ENCODE measurements at regions of chr4 and their contacts with region 1.

Region 1: DNA sequence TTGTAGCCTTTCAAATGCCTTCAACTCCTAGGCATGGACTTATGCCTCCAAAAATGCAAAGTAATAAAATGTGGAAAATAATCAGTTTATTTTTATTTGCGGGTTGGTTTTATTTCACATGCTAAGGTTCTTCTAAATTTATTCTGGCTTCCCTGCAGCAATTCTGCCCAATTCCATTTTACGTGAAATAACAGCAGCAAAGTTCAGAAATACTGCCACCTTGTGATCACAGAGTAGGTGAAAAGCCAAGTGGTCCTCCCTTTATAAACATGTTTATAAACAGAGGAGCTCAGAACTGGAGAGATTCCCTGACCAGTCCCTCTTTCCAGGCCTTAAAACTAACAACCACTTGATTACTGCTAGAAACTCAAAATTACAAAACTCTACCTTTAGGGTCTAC is 14.7 kb upstream of the DCHS2 start:
- DNase-seq: no peak
- ATAC-seq: peak; percentile 75
- H3K4me3 Mint-ChIP-seq: no peak overlapping the region
- H3K27ac Mint-ChIP-seq: no peak overlapping the region
- H3K4me1 Mint-ChIP-seq: peaks cover 15% of the 10 kb centered on the region
- H3K27me3 Mint-ChIP-seq: no peaks in the 10 kb centered on the region
- CTCF ChIP-seq: peak; percentile 26; the same call in 1 of the 2 replicates

Region 2: GRCh38 chr4:154344686-154345085 is 161.6 kb before region 1 on chr4:
- CTCF ChIA-PET with region 1: interaction called, 34 read pairs
- POLR2A ChIA-PET with region 1: no interaction called
- DNase-seq: peak; percentile 42
- ATAC-seq: peak; percentile 99
- H3K4me3 Mint-ChIP-seq: no peak overlapping the region
- H3K27ac Mint-ChIP-seq: no peak overlapping the region
- H3K4me1 Mint-ChIP-seq: no peaks in the 10 kb centered on the region
- H3K27me3 Mint-ChIP-seq: no peaks in the 10 kb centered on the region
- CTCF ChIP-seq: no peak

Region 3: GRCh38 chr4:154399259-154399974 is 106.8 kb before region 1 on chr4:
- CTCF ChIA-PET with region 1: interaction called, 17 read pairs
- POLR2A ChIA-PET with region 1: no interaction called
- DNase-seq: no peak
- ATAC-seq: peak; percentile 68
- H3K4me3 Mint-ChIP-seq: no peak overlapping the region
- H3K27ac Mint-ChIP-seq: no peak overlapping the region
- H3K4me1 Mint-ChIP-seq: no peaks in the 10 kb centered on the region
- H3K27me3 Mint-ChIP-seq: no peaks in the 10 kb centered on the region
- CTCF ChIP-seq: no peak

Region 4: GRCh38 chr4:154416190-154416547 is 90.1 kb before region 1 on chr4:
- CTCF ChIA-PET with region 1: interaction called, 24 read pairs
- POLR2A ChIA-PET with region 1: no interaction called
- DNase-seq: peak; percentile 59
- ATAC-seq: peak; percentile 74
- H3K4me3 Mint-ChIP-seq: peak overlapping the region; percentile 95
- H3K27ac Mint-ChIP-seq: no peak overlapping the region
- H3K4me1 Mint-ChIP-seq: peaks cover 19% of the 10 kb centered on the region
- H3K27me3 Mint-ChIP-seq: peaks cover 17% of the 10 kb centered on the region
- CTCF ChIP-seq: no peak

Region 5: DNA sequence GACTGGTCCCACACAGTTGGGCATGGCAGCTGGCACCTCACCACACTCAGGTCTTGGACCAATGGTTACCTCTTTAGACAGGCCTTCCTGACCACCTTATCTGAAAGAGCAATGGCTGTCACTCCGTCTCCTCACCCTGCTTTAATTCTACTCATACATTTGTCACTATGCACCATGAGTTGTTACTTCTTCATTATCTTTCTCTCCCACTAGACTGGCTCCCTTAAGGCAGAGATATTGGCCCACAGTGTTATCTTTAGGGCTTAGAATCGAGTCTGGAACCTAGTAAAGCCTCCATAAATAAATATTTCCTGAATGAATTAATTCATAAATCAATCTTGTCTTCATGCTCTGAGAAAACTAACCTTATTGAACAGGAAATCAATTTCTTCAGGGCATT is 61.3 kb before region 1 on chr4:
- CTCF ChIA-PET with region 1: no interaction called
- POLR2A ChIA-PET with region 1: no interaction called
- DNase-seq: no peak
- ATAC-seq: no peak
- H3K4me3 Mint-ChIP-seq: no peak overlapping the region
- H3K27ac Mint-ChIP-seq: no peak overlapping the region
- H3K4me1 Mint-ChIP-seq: no peaks in the 10 kb centered on the region
- H3K27me3 Mint-ChIP-seq: no peaks in the 10 kb centered on the region
- CTCF ChIP-seq: no peak

Region 6: GRCh38 chr4:154491341-154492271 is 14.6 kb before region 1 on chr4 and contains the start of gene DCHS2:
- CTCF ChIA-PET with region 1: interaction called, 13 read pairs
- POLR2A ChIA-PET with region 1: interaction called, 4 read pairs
- DNase-seq: peak; percentile 69
- ATAC-seq: peak; percentile 64
- H3K4me3 Mint-ChIP-seq: peak within 1 kb of the TSS; percentile 80
- H3K27ac Mint-ChIP-seq: no peak within 1 kb of the TSS
- H3K4me1 Mint-ChIP-seq: peaks cover 16% of the 10 kb centered on the region
- H3K27me3 Mint-ChIP-seq: peaks cover 83% of the 10 kb centered on the region
- CTCF ChIP-seq: no peak
- total RNA-seq, gene DCHS2: 1.3 to 1.9 TPM (median 1.4 TPM) in 3 replicates

Region 7: DNA sequence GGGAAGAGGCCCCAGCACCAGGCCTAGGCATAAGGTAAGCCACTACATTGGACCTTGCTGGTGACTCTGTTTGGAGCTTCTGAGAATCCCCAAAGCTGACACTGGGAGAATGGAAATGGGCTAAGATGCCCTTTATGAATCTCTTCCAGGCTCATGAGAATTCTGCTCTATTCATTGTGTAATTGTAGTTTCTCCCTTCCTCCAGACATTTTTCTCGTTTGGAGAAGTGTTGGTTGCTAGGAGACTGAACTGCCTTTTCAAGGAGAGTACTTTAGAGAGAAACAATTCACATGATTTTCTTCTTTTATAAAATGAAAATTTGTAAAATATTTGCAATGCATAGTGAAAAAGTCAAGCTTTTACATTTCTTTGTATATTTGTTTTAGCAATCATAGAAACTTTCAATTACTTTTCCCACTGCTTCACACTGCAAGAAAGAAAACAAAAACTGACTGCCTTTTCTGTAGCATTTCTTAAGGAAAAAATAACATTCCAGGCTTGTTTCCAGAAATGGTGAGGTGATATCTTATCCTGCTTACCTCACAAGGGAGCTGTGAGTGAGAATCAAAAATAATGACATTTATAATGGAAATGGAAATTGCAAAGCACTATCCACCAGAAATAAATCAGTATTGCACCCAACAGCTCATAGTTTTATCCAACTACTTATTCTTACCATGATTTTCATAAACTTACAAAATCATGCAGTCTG is 10.2 kb after region 1 on chr4:
- CTCF ChIA-PET with region 1: interaction called, 19 read pairs
- POLR2A ChIA-PET with region 1: no interaction called
- DNase-seq: no peak
- ATAC-seq: no peak
- H3K4me3 Mint-ChIP-seq: no peak overlapping the region
- H3K27ac Mint-ChIP-seq: no peak overlapping the region
- H3K4me1 Mint-ChIP-seq: peaks cover 12% of the 10 kb centered on the region
- H3K27me3 Mint-ChIP-seq: peaks cover 4% of the 10 kb centered on the region
- CTCF ChIP-seq: no peak

Region 8: DNA sequence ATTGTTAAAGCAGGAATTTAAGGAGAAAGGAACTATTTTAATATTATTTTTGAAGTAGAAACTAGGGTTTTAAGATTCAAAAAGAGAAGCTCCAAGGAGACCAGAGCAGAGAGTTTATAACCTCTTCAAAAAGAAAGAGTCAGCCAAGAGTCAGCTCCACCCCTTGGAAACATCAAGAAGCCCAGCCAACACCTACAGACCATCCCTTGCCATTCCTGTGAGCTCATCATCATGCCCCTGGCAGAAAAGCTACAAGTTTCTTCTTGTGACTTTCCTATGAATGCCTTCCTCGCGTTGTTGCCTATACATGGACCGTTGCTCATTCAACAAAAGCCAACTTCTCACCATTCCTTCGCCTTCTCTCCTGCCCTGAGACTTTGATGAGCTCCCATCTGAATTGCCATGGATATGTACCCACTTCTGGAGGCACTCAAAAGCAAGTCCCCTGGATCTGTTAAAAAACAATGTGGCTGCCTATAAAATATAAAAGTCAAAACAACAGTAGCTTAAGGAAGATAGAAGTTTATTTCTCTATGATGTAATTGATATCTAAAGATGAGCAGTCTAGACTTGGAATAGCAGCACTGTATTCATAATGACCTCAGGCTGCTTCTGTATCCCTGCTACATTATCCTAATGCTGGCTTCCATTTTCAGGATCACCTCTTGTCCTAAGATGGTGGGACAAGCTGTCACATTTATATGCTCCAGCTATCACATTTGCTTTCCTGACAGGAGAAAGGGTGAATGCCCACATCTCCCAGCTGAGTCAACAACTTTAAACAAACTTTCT is 23.7 kb after region 1 on chr4:
- CTCF ChIA-PET with region 1: interaction called, 11 read pairs
- POLR2A ChIA-PET with region 1: no interaction called
- DNase-seq: no peak
- ATAC-seq: no peak
- H3K4me3 Mint-ChIP-seq: no peak overlapping the region
- H3K27ac Mint-ChIP-seq: no peak overlapping the region
- H3K4me1 Mint-ChIP-seq: peaks cover 12% of the 10 kb centered on the region
- H3K27me3 Mint-ChIP-seq: no peaks in the 10 kb centered on the region
- CTCF ChIP-seq: no peak

Measured in WTC11 (cell line).